PC-9 (cell line): ENCODE measurements at regions of chr18 and their contacts with region 1.

Region 1: DNA sequence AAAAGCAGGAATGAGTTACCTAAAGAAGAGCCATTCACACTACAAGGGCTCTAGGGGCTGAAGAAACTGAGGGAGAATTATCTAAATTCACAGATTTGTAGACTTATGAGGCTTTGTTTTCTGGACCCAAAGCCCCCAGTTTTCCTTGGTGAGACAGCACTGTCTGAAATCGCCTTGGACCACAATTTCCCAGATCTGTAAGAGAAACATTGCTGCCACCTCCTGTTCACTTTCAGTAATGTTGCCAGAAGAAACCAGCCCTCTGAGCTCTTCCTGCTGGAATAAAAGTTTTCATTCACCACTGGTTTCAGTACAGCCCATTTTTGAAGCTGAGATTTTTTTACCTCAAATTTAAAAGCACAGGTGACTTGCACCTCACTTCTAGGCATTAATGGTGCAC is 169.2 kb downstream of the CDH20 start:
- DNase-seq: peak in 1 of 2 experiments; percentile 3
- H3K4me3 ChIP-seq: no peak overlapping the region
- H3K27ac ChIP-seq: no peak overlapping the region
- H3K4me1 ChIP-seq: no peaks in the 10 kb centered on the region
- H3K27me3 ChIP-seq: no peaks in the 10 kb centered on the region
- CTCF ChIP-seq: peak; percentile 72

Region 2: DNA sequence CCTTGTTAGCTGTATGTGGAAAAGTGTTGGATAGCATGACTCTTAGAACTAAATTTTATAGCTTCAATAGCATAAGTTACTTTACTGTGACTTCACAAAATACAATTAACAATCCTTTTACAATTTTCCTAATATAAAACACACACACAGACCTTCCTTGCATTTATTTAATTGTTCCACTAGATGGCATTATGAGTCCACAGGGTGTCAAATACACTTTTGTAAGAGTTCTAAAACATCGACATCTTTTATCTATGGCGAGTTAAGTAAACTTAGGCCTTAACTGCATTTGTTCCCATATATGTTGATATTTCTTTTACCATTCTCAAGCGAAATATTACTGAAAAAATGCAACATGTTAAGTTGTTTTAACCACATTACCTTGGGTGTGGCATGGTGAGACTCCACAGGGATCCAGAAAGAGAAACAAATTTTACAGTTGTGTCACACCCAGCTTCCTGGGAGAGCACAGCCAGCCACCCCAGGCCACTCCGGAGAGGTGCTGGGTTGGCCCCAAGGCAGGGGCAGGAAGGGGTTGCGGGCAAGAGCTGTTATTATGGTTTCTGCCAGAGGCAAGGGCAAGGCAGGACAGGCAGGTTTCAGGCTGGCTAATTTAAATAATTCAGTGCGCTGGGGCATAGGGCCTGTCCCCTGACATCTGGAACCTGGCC is 817.5 kb before region 1 on chr18:
- CTCF ChIA-PET with region 1: no interaction called
- POLR2A ChIA-PET with region 1: no interaction called
- intact Hi-C with region 1: loop called (anchors 2 kb)
- DNase-seq: no peak
- H3K4me3 ChIP-seq: no peak overlapping the region
- H3K27ac ChIP-seq: no peak overlapping the region
- H3K4me1 ChIP-seq: no peaks in the 10 kb centered on the region
- H3K27me3 ChIP-seq: no peaks in the 10 kb centered on the region
- CTCF ChIP-seq: peak; percentile 77

Region 3: GRCh38 chr18:60809937-60810336 is 692.5 kb before region 1 on chr18:
- CTCF ChIA-PET with region 1: interaction called, 3 read pairs
- POLR2A ChIA-PET with region 1: no interaction called
- intact Hi-C with region 1: loop called (anchors 5 kb)
- DNase-seq: no peak
- H3K4me3 ChIP-seq: no peak overlapping the region
- H3K27ac ChIP-seq: no peak overlapping the region
- H3K4me1 ChIP-seq: no peaks in the 10 kb centered on the region
- H3K27me3 ChIP-seq: no peaks in the 10 kb centered on the region
- CTCF ChIP-seq: no peak

Region 4: GRCh38 chr18:61635901-61636528 is 133.5 kb after region 1 on chr18:
- CTCF ChIA-PET with region 1: no interaction called
- POLR2A ChIA-PET with region 1: no interaction called
- intact Hi-C with region 1: no loop called
- DNase-seq: peak in 1 of 2 experiments; percentile 23
- H3K4me3 ChIP-seq: no peak overlapping the region
- H3K27ac ChIP-seq: no peak overlapping the region
- H3K4me1 ChIP-seq: no peaks in the 10 kb centered on the region
- H3K27me3 ChIP-seq: no peaks in the 10 kb centered on the region
- CTCF ChIP-seq: peak; percentile 72